Natural killer cell (primary cell): ENCODE measurements at regions of chr10 and their contacts with region 1.

Region 1: DNA sequence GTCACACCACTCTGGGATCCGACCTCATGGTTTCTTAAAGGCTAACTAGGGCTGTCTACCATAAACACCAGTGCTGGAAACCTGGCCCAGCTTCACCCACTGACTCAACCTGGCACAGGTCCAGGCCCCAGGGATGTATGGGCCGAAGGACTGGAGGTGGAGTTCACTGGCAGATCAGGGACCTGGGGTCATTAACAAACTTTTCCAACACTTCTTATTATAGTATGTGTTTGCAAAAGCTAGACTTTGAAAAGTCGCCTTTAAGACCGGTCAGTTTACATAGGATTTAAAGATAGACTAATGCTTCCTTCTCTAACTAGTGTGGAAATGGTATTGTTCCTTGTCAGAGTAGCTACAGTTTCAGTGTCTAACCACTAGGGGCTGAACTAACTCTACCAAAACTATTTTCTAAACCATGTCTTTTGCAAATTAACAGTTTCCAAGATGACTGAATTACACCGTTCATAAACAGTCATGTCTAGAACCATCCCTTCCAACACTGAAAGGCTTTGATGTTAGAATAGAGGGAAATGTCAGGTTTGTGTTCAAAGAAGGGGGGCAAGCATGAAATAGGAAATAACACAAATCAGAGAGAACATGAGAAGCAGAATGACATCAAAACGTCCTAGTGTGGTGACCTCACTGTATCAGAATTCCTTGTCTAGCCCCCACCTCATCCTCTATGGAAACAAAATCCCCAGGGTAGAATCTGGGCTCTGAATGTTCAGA is 29.7 kb downstream of the STN1 start:
- DNase-seq: peak in 1 of 2 donors; percentile 77
- ATAC-seq: peak; percentile 82 to 95 (median 82)
- H3K4me3 ChIP-seq: no peak overlapping the region
- H3K4me3 Mint-ChIP-seq: no peak overlapping the region
- H3K27ac ChIP-seq: no peak overlapping the region
- H3K27ac Mint-ChIP-seq: peak overlapping the region; percentile 5 to 53
- H3K4me1 ChIP-seq: no peaks in the 10 kb centered on the region
- H3K4me1 Mint-ChIP-seq: peaks cover 12 to 14% of the 10 kb centered on the region in 2 donors
- H3K27me3 ChIP-seq: no peaks in the 10 kb centered on the region
- H3K27me3 Mint-ChIP-seq: no peaks in the 10 kb centered on the region
- CTCF ChIP-seq: peak; percentile 72

Region 2: DNA sequence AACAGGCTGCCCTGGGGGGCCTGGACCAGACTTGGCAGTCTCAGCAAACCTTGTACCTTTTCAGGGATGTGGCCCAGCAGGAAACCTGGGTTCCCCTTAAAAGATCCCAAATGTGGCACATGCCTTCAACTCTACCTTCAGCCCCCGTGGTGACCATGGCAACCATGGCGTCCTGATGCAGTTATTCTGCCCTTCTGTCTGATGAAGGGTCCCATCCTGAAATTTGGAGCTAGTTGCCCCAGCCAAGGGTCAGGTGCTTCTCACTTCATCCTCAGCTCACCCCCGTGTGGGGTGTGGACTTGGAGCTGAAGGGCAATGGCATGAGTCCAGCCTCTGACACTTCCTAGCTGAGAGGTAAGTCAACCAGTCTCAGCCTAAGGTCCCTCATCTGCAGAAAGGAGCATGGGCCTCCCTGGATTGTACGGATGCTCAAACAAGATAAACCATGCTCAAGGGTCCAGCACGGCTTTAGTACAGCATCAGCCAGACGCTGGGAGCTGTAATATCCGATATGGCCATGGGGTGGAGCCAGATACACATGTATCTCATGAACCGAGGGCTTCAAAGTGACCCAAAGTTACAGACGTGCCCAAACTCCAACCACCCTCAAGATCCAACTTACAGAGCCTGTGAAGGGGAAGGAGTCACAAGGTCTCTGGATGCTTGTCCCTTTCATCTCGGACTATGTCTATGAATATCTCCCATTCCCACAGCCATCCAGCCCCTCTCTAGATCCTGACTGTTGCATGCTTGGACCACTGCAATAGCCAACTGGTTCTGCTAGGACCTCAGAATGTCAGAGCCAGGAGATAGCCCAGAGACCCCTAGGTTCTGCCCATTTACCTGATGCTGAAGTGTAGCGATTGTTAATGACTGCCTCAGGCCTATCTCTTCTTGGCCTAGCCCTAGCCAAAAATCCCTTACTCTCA is 175.4 kb before region 1 on chr10:
- intact Hi-C with region 1: loop called (anchors 1 kb)
- DNase-seq: peak; percentile 74 to 89
- ATAC-seq: peak; percentile 84 to 98 (median 95)
- H3K4me3 ChIP-seq: no peak overlapping the region
- H3K4me3 Mint-ChIP-seq: no peak overlapping the region
- H3K27ac ChIP-seq: no peak overlapping the region
- H3K27ac Mint-ChIP-seq: no peak overlapping the region
- H3K4me1 ChIP-seq: no peaks in the 10 kb centered on the region
- H3K4me1 Mint-ChIP-seq: no peaks in the 10 kb centered on the region
- H3K27me3 ChIP-seq: no peaks in the 10 kb centered on the region
- H3K27me3 Mint-ChIP-seq: no peaks in the 10 kb centered on the region
- CTCF ChIP-seq: peak; percentile 86

Region 3: DNA sequence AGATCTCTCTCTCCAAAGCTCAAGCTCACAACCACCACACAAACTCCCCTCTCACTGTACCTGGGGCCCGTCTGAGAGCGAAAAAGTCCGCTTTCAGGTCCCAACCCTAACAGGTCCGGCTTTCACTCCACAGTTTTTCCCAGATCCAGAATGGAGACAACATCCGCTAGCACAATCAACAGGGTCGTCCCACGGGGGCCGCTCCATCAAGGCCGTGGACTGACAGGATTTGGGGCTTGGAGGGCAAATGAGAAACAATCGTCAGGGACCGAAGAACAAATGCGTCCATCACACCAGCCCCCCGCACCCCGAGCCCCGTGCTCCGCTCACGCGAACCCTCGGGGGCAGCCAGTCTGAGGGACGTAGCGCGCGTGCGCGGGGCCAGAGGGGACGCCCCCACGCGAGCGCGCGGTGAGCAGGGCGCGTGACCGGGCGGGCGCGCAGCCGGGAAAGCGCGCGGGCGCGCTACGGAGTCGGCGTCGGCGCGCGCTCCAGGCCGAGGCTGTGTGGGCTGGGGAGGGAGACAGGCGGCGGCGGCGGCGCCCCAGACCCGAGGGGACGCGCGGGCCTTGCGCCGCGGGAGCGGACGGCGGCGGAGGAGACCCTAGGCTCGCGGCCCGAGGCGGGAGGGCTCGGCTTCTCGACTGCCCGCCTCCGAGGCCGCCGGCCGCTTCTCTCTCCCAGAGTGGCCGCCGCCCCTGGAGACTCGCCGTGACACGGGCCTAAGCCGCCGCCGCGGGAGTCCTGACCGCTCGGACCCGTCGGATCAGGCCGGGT is 78.6 kb after region 1 on chr10 and contains the start of gene SLK:
- intact Hi-C with region 1: loop called (anchors 1 kb)
- DNase-seq: peak; percentile 89 to 96
- ATAC-seq: peak; percentile 88 to 96 (median 91)
- H3K4me3 ChIP-seq: peak within 1 kb of the TSS; percentile 96
- H3K4me3 Mint-ChIP-seq: peak within 1 kb of the TSS; percentile 95
- H3K27ac ChIP-seq: peak within 1 kb of the TSS; percentile 88
- H3K27ac Mint-ChIP-seq: peak within 1 kb of the TSS; percentile 90 to 92
- H3K4me1 ChIP-seq: peaks cover 19% of the 10 kb centered on the region
- H3K4me1 Mint-ChIP-seq: peaks cover 35 to 36% of the 10 kb centered on the region in 2 donors
- H3K27me3 ChIP-seq: no peaks in the 10 kb centered on the region
- H3K27me3 Mint-ChIP-seq: no peaks in the 10 kb centered on the region
- CTCF ChIP-seq: no peak
- total RNA-seq, gene SLK: 33.4 to 48.7 (median 40.3) TPM

Region 4: DNA sequence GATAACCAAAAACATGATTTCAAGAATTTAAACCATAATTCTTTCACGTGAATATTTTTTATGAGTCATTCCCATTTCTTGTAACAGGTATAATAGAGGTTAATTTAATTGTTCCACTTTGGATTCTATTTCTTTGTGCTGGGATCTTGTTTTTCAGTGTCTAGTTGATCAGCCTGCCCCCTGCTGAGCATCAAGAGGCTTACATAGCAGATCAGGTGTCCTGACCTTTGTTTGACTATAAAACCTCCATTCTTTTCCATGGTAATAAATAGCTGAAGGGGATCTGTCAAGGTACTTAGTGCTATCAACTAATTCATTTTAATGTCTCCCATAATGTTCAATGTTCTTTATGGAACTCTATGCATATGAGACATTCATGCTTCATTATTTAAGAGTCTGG is 192.5 kb after region 1 on chr10:
- intact Hi-C with region 1: loop called (anchors 1 kb)
- DNase-seq: peak in 1 of 2 donors; percentile 61
- ATAC-seq: no peak
- H3K4me3 ChIP-seq: no peak overlapping the region
- H3K4me3 Mint-ChIP-seq: no peak overlapping the region
- H3K27ac ChIP-seq: no peak overlapping the region
- H3K27ac Mint-ChIP-seq: no peak overlapping the region
- H3K4me1 ChIP-seq: no peaks in the 10 kb centered on the region
- H3K4me1 Mint-ChIP-seq: no peaks in the 10 kb centered on the region
- H3K27me3 ChIP-seq: no peaks in the 10 kb centered on the region
- H3K27me3 Mint-ChIP-seq: peaks cover 0 to 4% of the 10 kb centered on the region in 2 donors
- CTCF ChIP-seq: peak; percentile 15

Region 5: DNA sequence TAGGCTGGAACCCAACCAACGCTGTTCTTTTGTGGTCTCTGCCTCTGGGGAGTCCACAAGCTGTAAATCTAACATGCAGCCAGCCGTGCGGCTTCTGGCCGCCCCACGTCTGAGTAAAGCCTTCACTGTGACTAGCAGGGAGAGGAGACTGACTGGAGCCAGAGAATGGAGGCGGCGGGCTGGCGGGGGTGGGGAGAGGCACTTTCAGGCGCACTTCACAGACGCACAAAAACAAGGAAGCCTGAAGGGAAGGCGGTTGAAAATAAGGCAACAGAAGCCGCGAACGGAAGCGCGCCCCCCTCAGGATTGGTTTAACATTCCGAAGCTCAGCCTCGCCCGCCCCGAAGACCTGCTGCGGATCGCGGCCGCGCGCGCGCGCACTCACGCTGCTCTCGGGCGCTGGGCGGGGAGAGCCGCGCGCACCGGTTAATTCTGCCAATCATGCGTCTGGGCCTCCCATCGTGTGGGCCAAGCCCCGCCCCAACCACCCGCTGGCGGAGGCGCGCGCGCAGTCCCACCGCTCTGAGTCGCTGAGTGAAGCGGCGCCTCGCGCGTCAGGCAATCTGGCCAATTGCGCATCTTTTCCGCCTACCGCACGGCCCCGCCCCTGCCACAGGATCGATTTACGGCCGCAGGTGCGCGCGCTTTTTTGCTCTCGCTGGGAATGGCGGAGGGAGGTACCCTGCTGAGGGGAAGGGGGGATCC is 233.4 kb after region 1 on chr10 and contains the start of gene SFR1:
- intact Hi-C with region 1: loop called (anchors 1 kb)
- DNase-seq: peak; percentile 99
- ATAC-seq: peak; percentile 85 to 97 (median 90)
- H3K4me3 ChIP-seq: peak within 1 kb of the TSS; percentile 96
- H3K4me3 Mint-ChIP-seq: peak within 1 kb of the TSS; percentile 93
- H3K27ac ChIP-seq: peak within 1 kb of the TSS; percentile 97
- H3K27ac Mint-ChIP-seq: peak within 1 kb of the TSS; percentile 98 to 99
- H3K4me1 ChIP-seq: no peaks in the 10 kb centered on the region
- H3K4me1 Mint-ChIP-seq: peaks cover 14% of the 10 kb centered on the region in 2 donors
- H3K27me3 ChIP-seq: no peaks in the 10 kb centered on the region
- H3K27me3 Mint-ChIP-seq: peaks cover 0 to 9% of the 10 kb centered on the region in 2 donors
- CTCF ChIP-seq: peak; percentile 51
- total RNA-seq, gene SFR1: 9.1 to 19.1 (median 18.3) TPM

Region 6: DNA sequence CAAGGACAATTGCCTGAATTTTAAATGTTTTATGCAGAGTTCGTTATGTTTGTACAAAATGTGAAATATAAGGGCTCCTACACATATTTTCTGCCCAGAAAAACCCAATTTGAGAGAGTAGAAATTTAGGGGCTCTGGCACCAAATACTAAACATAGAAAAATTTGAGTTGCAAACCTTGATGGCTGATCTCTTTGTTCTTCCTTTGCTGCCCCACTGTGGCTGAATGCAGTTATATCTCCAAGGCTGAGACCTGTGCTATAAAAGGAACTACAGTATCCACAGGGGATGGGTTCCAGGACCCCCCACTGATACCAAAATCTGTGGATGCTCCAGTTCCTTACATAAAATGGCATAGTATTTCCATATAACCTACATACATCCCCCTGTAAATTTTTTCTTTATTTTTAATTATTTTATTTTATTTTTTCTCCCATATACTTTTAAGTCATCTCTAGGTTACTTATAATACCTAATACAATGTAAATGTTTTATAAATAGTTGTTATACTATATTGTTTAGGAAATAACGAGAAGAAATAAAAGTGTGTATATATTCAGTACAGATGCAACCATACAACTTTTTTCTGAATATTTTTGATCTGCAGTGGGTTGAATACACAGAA is 321.4 kb after region 1 on chr10:
- intact Hi-C with region 1: loop called (anchors 1 kb)
- DNase-seq: peak in 1 of 2 donors; percentile 71
- ATAC-seq: peak in 2 of 3 donors; percentile 47 to 64
- H3K4me3 ChIP-seq: no peak overlapping the region
- H3K4me3 Mint-ChIP-seq: no peak overlapping the region
- H3K27ac ChIP-seq: no peak overlapping the region
- H3K27ac Mint-ChIP-seq: no peak overlapping the region
- H3K4me1 ChIP-seq: no peaks in the 10 kb centered on the region
- H3K4me1 Mint-ChIP-seq: no peaks in the 10 kb centered on the region
- H3K27me3 ChIP-seq: no peaks in the 10 kb centered on the region
- H3K27me3 Mint-ChIP-seq: peaks cover 20 to 27% of the 10 kb centered on the region in 2 donors
- CTCF ChIP-seq: peak; percentile 30